Caco-2 (cell line): ENCODE measurements at regions of chr19 and their contacts with region 1.

Region 1: GRCh38 chr19:57465495-57466395 is 8.8 kb upstream of the VN1R1 start:
- DNase-seq: peak; percentile 43 to 69
- H3K4me3 ChIP-seq: no peak overlapping the region
- H3K4me3 Mint-ChIP-seq: no peak overlapping the region
- H3K27ac Mint-ChIP-seq: no peak overlapping the region
- H3K4me1 ChIP-seq: no peaks in the 10 kb centered on the region
- H3K4me1 Mint-ChIP-seq: no peaks in the 10 kb centered on the region
- H3K27me3 ChIP-seq: no peaks in the 10 kb centered on the region
- H3K27me3 Mint-ChIP-seq: no peaks in the 10 kb centered on the region
- CTCF ChIP-seq: peak; percentile 54 to 78

Region 2: GRCh38 chr19:57248646-57249045 is 217.1 kb before region 1 on chr19:
- CTCF ChIA-PET with region 1: no interaction called
- POLR2A ChIA-PET with region 1: no interaction called
- intact Hi-C with region 1: no loop called
- DNase-seq: no peak
- H3K4me3 ChIP-seq: no peak overlapping the region
- H3K4me3 Mint-ChIP-seq: no peak overlapping the region
- H3K27ac Mint-ChIP-seq: no peak overlapping the region
- H3K4me1 ChIP-seq: no peaks in the 10 kb centered on the region
- H3K4me1 Mint-ChIP-seq: no peaks in the 10 kb centered on the region
- H3K27me3 ChIP-seq: no peaks in the 10 kb centered on the region
- H3K27me3 Mint-ChIP-seq: no peaks in the 10 kb centered on the region
- CTCF ChIP-seq: no peak

Region 3: GRCh38 chr19:57903618-57904184 is 438.0 kb after region 1 on chr19:
- CTCF ChIA-PET with region 1: no interaction called
- POLR2A ChIA-PET with region 1: no interaction called
- intact Hi-C with region 1: loop called (anchors 1 kb)
- DNase-seq: no peak
- H3K4me3 ChIP-seq: no peak overlapping the region
- H3K4me3 Mint-ChIP-seq: no peak overlapping the region
- H3K27ac Mint-ChIP-seq: no peak overlapping the region
- H3K4me1 ChIP-seq: no peaks in the 10 kb centered on the region
- H3K4me1 Mint-ChIP-seq: no peaks in the 10 kb centered on the region
- H3K27me3 ChIP-seq: no peaks in the 10 kb centered on the region
- H3K27me3 Mint-ChIP-seq: no peaks in the 10 kb centered on the region
- CTCF ChIP-seq: no peak